ENCODE measurements at regions of chr2 and their contacts with region 1.

Region 1: GRCh38 chr2:231612179-231613053 is 19.8 kb downstream of the TEX44 start:
- DNase-seq: peak; percentile 97
- H3K4me3 Mint-ChIP-seq: peak overlapping the region; percentile 86
- H3K27ac Mint-ChIP-seq: peak overlapping the region; percentile 98
- H3K4me1 Mint-ChIP-seq: peaks cover 43% of the 10 kb centered on the region
- H3K27me3 Mint-ChIP-seq: no peaks in the 10 kb centered on the region

Region 2: GRCh38 chr2:231642631-231643494 is 30.4 kb after region 1 on chr2:
- intact Hi-C with region 1: loop called (anchors 1 kb)
- DNase-seq: peak; percentile 92
- H3K4me3 Mint-ChIP-seq: peak overlapping the region; percentile 77
- H3K27ac Mint-ChIP-seq: peak overlapping the region; percentile 90
- H3K4me1 Mint-ChIP-seq: peaks cover 29% of the 10 kb centered on the region
- H3K27me3 Mint-ChIP-seq: no peaks in the 10 kb centered on the region

Region 3: GRCh38 chr2:231662028-231662810 is 49.8 kb after region 1 on chr2:
- intact Hi-C with region 1: loop called (anchors 1 kb)
- DNase-seq: peak; percentile 100
- H3K4me3 Mint-ChIP-seq: peak overlapping the region; percentile 70
- H3K27ac Mint-ChIP-seq: peak overlapping the region; percentile 98
- H3K4me1 Mint-ChIP-seq: peaks cover 22% of the 10 kb centered on the region
- H3K27me3 Mint-ChIP-seq: no peaks in the 10 kb centered on the region

Region 4: GRCh38 chr2:231674587-231675338 is 62.3 kb after region 1 on chr2:
- intact Hi-C with region 1: loop called (anchors 1 kb)
- DNase-seq: peak; percentile 91
- H3K4me3 Mint-ChIP-seq: peak overlapping the region; percentile 34
- H3K27ac Mint-ChIP-seq: peak overlapping the region; percentile 75
- H3K4me1 Mint-ChIP-seq: peaks cover 19% of the 10 kb centered on the region
- H3K27me3 Mint-ChIP-seq: peaks cover 2% of the 10 kb centered on the region

Region 5: DNA sequence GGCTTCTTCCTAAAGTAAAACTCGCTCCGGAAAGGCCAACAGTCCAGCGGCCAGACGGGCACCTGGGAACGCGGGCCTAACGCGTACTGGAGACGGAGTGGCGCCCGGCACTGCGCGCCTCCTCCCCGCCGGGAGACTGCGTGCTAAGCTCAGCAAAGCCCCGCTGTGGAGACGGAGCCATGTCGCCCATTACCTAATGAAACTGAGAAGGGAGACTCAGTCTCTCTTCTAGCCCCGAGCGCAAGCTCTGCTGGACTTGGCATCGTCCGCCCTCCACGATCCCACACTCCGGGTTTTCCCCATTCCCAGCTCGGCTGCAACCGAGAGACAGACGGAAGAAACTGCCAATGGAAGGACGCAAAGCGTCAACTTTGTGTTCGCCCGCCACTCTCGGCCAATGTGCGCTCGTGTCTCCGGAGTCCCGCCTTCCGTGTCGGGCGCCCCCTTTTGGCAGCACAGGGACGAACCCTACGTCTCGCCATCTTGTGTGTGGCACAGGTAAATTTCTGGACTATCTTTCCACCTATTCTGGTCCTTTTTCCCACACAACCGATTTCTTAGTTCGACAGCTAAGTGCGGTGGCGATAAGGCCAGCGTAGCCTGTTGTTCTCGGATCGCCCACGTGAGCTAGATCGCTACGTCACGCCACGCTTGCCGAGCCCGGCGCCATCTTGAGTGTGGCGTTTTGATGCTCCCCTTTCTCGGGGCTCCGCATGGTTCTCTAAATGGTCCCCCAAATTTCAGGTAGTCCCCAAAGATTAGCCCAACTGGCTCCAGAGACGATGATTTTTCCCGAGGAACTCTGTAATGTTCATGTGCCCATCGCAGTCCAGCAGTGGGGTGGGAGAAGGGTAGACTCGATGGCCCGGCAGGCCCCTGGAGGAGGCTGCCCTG is 94.6 kb after region 1 on chr2:
- intact Hi-C with region 1: loop called (anchors 1 kb)
- DNase-seq: peak; percentile 99
- H3K4me3 Mint-ChIP-seq: peak overlapping the region; percentile 92
- H3K27ac Mint-ChIP-seq: peak overlapping the region; percentile 100
- H3K4me1 Mint-ChIP-seq: peaks cover 23% of the 10 kb centered on the region
- H3K27me3 Mint-ChIP-seq: peaks cover 1% of the 10 kb centered on the region

Region 6: GRCh38 chr2:231713730-231714430 is 101.5 kb after region 1 on chr2:
- intact Hi-C with region 1: loop called (anchors 1 kb)
- DNase-seq: peak; percentile 96
- H3K4me3 Mint-ChIP-seq: peak overlapping the region; percentile 79
- H3K27ac Mint-ChIP-seq: peak overlapping the region; percentile 95
- H3K4me1 Mint-ChIP-seq: peaks cover 22% of the 10 kb centered on the region
- H3K27me3 Mint-ChIP-seq: no peaks in the 10 kb centered on the region

Region 7: GRCh38 chr2:233566141-233566960 is 1953.9 kb after region 1 on chr2 and contains the start of gene USP40:
- intact Hi-C with region 1: loop called (anchors 10 kb)
- DNase-seq: peak; percentile 87
- H3K4me3 Mint-ChIP-seq: peak within 1 kb of the TSS; percentile 95
- H3K27ac Mint-ChIP-seq: peak within 1 kb of the TSS; percentile 95
- H3K4me1 Mint-ChIP-seq: peaks cover 12% of the 10 kb centered on the region
- H3K27me3 Mint-ChIP-seq: peaks cover 22% of the 10 kb centered on the region
- total RNA-seq, gene USP40: 11.3 and 12.8 TPM in 2 replicates